Dendritic cell treated with granulocyte-macrophage colony-stimulating factor and Interleukin-4, amounts not matched to agents 40 ng/mL and 50 ng/mL, for 4 days (primary cell): ENCODE measurements at regions of chr7 and their contacts with region 1.

Region 1: GRCh38 chr7:19442016-19442785 is 266.6 kb downstream of the POLR1F start:
- H3K4me3 Mint-ChIP-seq: no peak overlapping the region
- H3K27ac Mint-ChIP-seq: no peak overlapping the region
- H3K4me1 Mint-ChIP-seq: peaks cover 19% of the 10 kb centered on the region
- H3K27me3 Mint-ChIP-seq: no peaks in the 10 kb centered on the region

Region 2: GRCh38 chr7:18693406-18693805 is 748.8 kb before region 1 on chr7:
- intact Hi-C with region 1: loop called (anchors 10 kb)
- H3K4me3 Mint-ChIP-seq: no peak overlapping the region
- H3K27ac Mint-ChIP-seq: no peak overlapping the region
- H3K4me1 Mint-ChIP-seq: no peaks in the 10 kb centered on the region
- H3K27me3 Mint-ChIP-seq: no peaks in the 10 kb centered on the region

Region 3: GRCh38 chr7:19121977-19122588 is 320.1 kb before region 1 on chr7:
- intact Hi-C with region 1: loop called (anchors 2 kb)
- H3K4me3 Mint-ChIP-seq: no peak overlapping the region
- H3K27ac Mint-ChIP-seq: no peak overlapping the region
- H3K4me1 Mint-ChIP-seq: peaks cover 6% of the 10 kb centered on the region
- H3K27me3 Mint-ChIP-seq: peaks cover 58% of the 10 kb centered on the region